ENCODE measurements at regions of chr14 and their contacts with region 1.

Region 1: DNA sequence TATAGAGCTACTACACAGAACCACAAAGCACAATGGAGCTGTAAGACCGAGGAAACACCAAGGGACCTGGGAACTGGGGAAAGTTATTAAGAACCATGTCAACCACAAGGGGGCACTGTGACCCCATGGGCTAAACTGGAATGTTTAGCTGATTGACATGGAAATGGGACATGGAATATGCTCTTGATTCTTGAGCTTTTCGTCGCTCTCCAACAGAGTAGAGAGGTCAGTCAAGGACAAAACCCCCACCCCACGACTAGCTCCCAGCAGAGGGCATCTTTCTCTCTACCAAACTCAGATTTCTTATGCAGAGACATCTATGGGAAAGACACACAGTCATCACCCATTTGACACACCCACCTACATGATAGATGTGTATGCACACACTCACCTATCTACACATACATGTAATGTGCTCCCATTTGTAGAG is 10.1 kb downstream of the NDRG2 start:
- DNase-seq: peak; percentile 92
- H3K4me3 ChIP-seq: no peak overlapping the region
- H3K27ac ChIP-seq: no peak overlapping the region
- H3K4me1 ChIP-seq: peaks cover 3% of the 10 kb centered on the region
- H3K27me3 ChIP-seq: no peaks in the 10 kb centered on the region
- CTCF ChIP-seq: peak; percentile 89 to 97 (median 90)
- POLR2A ChIP-seq: no peak

Region 2: GRCh38 chr14:21092273-21093011 is 77.7 kb after region 1 on chr14:
- intact Hi-C with region 1: loop called (anchors 10 kb)
- DNase-seq: peak; percentile 91
- H3K4me3 ChIP-seq: peak overlapping the region; percentile 20 to 29
- H3K27ac ChIP-seq: peak overlapping the region in 1 of 2 donors; percentile 6
- H3K4me1 ChIP-seq: peaks cover 18% of the 10 kb centered on the region
- H3K27me3 ChIP-seq: no peaks in the 10 kb centered on the region
- CTCF ChIP-seq: peak; percentile 100
- POLR2A ChIP-seq: no peak

Region 3: DNA sequence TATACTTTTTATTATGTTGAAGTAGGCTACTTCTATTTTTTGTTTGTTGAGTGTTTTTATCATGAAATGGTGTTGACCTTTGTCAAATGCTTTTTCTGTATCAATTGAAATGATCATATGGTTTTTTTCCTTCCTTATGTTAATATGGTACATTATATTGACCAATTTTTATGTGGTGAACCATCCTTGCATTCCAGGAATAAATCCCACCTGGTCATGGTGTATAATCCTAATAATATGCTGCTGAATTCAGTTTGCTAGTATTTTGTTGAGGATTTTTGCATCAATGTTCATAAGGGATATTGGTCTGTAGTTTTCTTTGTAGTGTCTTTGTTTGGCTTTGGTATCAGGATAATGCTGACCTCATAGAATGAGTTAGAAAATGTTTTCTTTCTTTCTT is 130.7 kb after region 1 on chr14:
- intact Hi-C with region 1: no loop called
- DNase-seq: no peak
- H3K4me3 ChIP-seq: no peak overlapping the region
- H3K27ac ChIP-seq: no peak overlapping the region
- H3K4me1 ChIP-seq: no peaks in the 10 kb centered on the region
- H3K27me3 ChIP-seq: no peaks in the 10 kb centered on the region
- CTCF ChIP-seq: no peak
- POLR2A ChIP-seq: no peak